Dorsolateral prefrontal cortex (tissue), 120 donors: ENCODE measurements at regions of chr15 and their contacts with region 1.

Region 1: GRCh38 chr15:39756806-39757522 is 25.7 kb downstream of the FSIP1 start:
- DNase-seq: no peak
- H3K4me3 ChIP-seq: no peak overlapping the region
- H3K27ac ChIP-seq: no peak overlapping the region
- H3K27me3 ChIP-seq: no peaks in the 10 kb centered on the region
- CTCF ChIP-seq: peak; percentile 78 to 97 (median 90)

Region 2: DNA sequence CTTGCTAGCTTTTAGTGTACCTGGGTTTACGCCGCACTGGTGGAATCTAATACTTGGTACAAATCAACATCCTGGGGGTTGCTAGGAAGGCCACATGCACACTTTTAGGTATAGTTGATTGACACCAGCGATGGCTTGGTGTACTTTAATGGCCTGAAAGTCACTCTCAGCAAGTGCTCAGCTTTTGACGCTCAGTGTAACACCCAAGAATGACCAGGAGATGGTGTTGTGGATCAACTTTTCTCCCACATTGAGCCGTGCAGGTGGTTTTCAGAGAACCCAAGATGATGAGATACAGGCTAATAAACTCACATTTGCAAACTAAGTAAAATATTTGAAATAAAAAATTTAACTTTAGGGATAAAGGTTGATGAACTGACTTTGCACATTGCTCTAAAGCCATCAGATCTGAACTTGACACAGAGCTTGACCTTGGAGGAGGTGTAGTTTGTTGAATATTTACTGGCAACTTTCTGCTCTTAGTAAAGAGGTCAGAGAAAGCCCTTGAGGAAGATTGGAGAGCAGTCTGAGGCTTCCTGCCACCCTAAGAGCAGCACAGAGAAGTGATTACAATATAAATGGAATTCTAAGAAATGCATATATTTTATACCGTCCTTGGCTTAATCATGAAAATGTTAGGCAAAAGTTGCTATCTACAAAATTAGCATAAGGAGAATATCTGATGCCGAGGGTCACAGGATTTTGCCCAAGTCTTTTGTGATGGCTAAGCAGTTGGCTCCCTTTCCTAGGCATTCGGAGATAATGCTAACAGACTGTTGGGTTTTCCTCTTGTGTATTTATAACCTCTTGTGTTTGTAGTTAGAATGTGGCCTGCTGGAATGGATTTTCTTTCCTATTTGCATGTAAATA is 1048.9 kb before region 1 on chr15:
- intact Hi-C with region 1: loop called in 1 of 2 experiments (anchors 5 kb)
- DNase-seq: peak in 2 of 10 donors; percentile 28 to 32
- H3K4me3 ChIP-seq: no peak overlapping the region
- H3K27ac ChIP-seq: no peak overlapping the region
- H3K27me3 ChIP-seq: peaks cover 0 to 30% (median 5%) of the 10 kb centered on the region in 45 donors
- CTCF ChIP-seq: peak; percentile 39 to 81 (median 70)

Region 3: DNA sequence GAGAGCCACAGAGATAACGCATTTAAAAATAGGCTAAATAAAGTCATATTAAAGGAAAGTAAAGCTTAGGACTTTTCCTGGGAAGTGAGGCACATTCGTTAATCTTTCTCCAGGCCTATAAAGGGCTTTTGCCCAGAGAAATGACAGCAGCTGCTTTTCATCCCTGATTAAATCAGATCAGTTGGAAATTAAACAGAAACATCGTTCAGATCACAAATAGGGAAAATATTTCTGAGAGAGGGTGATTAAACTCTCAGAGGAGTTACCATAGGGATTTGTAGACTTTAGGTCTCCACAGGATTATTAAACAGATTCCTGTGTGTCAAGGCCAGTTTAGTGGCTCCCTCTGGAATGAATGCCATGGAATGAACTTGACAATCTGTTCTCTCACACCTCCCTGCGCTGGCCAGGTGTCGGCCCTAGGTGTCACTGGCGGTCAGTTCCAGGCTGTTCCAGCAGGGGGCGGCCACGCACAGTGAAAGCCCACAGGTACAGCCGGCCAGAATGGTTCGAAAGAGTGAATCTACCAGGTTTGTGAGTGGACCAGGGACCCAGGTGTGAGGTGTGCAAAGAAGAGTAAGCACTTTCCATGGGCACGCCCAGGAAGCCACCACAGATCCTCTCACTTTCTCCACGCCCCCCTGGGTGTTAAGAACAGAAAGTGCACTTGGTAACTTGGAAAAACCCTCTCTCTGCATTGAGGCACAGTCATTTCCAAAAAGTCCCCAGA is 939.4 kb before region 1 on chr15:
- intact Hi-C with region 1: loop called (anchors 10 kb)
- DNase-seq: peak; percentile 70 to 85 (median 79)
- H3K4me3 ChIP-seq: peak overlapping the region in 17 of 59 donors; percentile 4 to 45 (median 17)
- H3K27ac ChIP-seq: no peak overlapping the region
- H3K27me3 ChIP-seq: peaks cover 0 to 6% (median 0%) of the 10 kb centered on the region in 45 donors
- CTCF ChIP-seq: peak; percentile 78 to 100 (median 96)

Region 4: GRCh38 chr15:39686000-39686613 is 70.9 kb before region 1 on chr15:
- intact Hi-C with region 1: loop called (anchors 2 kb)
- DNase-seq: peak in 2 of 10 donors; percentile 17 to 43
- H3K4me3 ChIP-seq: no peak overlapping the region
- H3K27ac ChIP-seq: no peak overlapping the region
- H3K27me3 ChIP-seq: no peaks in the 10 kb centered on the region
- CTCF ChIP-seq: peak; percentile 70 to 95 (median 86)

Region 5: DNA sequence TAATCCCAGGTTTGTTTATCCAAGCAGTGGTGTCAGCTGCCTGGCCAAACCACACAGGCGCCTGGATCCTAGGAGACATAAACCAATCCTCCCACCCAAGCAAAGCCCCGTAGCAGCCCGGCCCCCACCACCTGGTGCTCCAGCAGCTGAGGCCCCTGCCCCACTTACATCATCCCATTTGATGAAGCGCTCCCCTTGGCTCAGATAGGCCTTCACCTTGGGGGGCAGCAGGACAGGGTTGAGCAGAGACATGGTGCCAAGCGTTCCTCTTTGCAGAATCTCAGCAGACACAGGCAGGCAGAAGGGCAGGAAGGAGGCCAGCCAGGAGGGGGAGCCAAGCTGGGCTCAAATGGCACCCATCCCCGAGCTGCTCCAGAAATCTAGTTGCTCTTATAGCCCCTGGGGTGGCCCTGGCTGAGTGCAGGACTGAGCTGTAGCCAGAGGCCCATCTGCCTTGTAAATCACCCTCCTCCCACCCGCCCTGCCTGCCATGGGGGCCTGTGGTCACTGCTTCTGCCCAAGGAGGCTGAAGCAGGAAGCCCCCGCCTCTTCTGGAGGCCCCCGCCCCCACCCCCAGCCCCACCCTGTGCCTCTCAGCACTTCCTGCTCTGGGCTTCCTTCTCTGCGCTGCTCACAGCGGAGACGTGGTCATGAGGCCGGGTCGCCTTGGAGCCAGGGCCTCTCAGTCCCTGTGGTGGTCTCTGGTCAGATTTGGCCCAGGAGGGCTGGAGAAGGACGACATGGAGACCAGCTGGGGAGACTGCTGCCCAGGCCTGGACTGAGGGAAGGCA is 550.7 kb after region 1 on chr15 and contains the start of gene PLCB2:
- intact Hi-C with region 1: no loop called
- DNase-seq: peak in 1 of 10 donors; percentile 27
- H3K4me3 ChIP-seq: peak within 1 kb of the TSS in 46 of 59 donors; percentile 0 to 54 (median 36)
- H3K27ac ChIP-seq: peak within 1 kb of the TSS in 24 of 59 donors; percentile 5 to 66 (median 38)
- H3K27me3 ChIP-seq: no peaks in the 10 kb centered on the region
- CTCF ChIP-seq: no peak
- total RNA-seq, gene PLCB2: 10.2 to 52.4 (median 21.2) TPM